ENCODE measurements at regions of chr3 and their contacts with region 1.

Region 1: DNA sequence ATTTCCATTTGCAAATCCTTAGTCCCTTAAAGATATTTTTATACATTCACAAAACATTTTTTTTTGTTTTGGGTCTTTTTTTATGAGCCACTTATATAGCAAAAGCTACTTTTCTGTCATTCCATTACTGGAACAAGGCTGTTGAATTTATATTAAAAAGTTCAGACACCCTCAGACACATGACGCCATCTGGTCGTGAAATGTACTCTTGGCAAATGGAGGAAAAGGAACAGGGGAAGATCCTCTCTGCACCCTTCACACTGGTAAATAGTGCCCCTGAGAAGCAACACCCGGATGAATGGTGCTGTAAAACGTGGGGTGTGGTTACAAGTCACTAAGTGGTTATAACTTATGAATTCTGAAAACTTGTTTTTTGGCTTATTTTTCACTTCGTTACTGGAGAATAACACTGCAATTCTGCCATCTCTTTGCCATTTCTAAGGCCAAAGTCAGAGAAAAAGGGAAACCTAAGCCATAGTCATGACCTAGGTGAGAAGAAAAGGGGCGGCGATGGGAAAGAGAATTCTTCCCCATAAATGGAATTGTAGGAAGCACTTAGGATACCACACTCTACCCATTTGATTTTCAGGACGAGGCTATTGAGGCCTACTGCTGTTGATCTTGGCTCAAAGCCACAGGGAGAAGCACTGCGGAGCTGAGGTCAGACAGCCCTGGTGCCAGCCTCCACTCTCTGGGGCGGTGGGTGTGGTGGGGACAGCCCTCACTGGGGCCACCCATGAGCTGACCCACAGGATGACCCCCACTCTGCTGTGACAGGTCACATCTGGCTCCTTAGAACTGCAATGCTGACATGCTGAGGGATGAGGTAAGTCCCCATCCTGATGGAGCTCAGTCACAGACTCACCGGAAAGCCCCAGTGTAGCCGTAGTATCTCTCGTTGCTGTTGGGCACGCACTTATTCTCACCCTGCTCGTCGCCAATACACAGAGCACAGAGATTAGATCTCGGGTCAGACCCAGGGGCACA is 21.8 kb downstream of the LTF start:
- DNase-seq: peak; percentile 85
- H3K4me3 Mint-ChIP-seq: no peak overlapping the region
- H3K27ac Mint-ChIP-seq: no peak overlapping the region
- H3K4me1 Mint-ChIP-seq: peaks cover 25% of the 10 kb centered on the region
- H3K27me3 Mint-ChIP-seq: peaks cover 7% of the 10 kb centered on the region

Region 2: GRCh38 chr3:46208167-46208704 is 234.6 kb before region 1 on chr3 and contains the start of gene CCR1:
- intact Hi-C with region 1: loop called (anchors 5 kb)
- DNase-seq: peak; percentile 89
- H3K4me3 Mint-ChIP-seq: peak within 1 kb of the TSS; percentile 73
- H3K27ac Mint-ChIP-seq: peak within 1 kb of the TSS; percentile 74
- H3K4me1 Mint-ChIP-seq: peaks cover 56% of the 10 kb centered on the region
- H3K27me3 Mint-ChIP-seq: peaks cover 2% of the 10 kb centered on the region
- total RNA-seq, gene CCR1: 5.9 and 6.7 TPM in 2 replicates

Region 3: GRCh38 chr3:46378426-46378942 is 64.4 kb before region 1 on chr3:
- intact Hi-C with region 1: loop called (anchors 2 kb)
- DNase-seq: peak; percentile 90
- H3K4me3 Mint-ChIP-seq: no peak overlapping the region
- H3K27ac Mint-ChIP-seq: peak overlapping the region; percentile 57
- H3K4me1 Mint-ChIP-seq: peaks cover 42% of the 10 kb centered on the region
- H3K27me3 Mint-ChIP-seq: peaks cover 23% of the 10 kb centered on the region

Region 4: DNA sequence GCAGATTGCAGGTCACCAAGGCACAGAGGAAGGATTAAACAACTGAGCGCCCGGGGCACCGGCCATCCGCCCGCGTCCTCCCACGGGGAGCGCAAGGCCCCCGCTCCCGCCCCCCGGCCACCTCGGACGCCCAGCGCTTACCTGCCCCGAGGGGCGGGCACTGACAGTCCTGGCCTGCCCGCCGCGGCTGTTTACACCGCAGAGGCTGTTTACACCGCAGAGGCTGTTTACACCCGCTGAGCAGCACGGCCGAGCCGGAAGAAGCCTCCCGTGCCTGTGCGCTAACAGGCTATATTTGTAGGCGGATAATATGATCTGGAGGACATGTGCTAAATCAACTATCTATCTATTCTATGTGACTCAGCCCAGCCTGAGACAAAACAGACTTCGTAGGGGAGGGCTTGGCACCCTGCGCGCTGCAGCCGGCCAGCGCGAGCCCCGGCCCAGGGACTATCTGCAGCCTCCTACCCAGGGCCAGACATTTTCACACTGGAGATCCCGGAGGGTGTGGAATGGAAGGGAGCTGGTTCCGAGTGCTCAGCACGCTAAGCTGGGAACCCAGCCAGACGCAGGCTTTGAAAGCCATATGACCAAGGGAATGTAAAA is 123.3 kb after region 1 on chr3 and contains the start of gene LRRC2:
- intact Hi-C with region 1: no loop called
- DNase-seq: peak; percentile 80
- H3K4me3 Mint-ChIP-seq: peak within 1 kb of the TSS; percentile 67
- H3K27ac Mint-ChIP-seq: no peak within 1 kb of the TSS
- H3K4me1 Mint-ChIP-seq: peaks cover 12% of the 10 kb centered on the region
- H3K27me3 Mint-ChIP-seq: peaks cover 53% of the 10 kb centered on the region
- total RNA-seq, gene LRRC2: not detected in 2 replicates